Common myeloid progenitor, CD34-positive (primary cell): ENCODE measurements at regions of chr9 and their contacts with region 1.

Region 1: DNA sequence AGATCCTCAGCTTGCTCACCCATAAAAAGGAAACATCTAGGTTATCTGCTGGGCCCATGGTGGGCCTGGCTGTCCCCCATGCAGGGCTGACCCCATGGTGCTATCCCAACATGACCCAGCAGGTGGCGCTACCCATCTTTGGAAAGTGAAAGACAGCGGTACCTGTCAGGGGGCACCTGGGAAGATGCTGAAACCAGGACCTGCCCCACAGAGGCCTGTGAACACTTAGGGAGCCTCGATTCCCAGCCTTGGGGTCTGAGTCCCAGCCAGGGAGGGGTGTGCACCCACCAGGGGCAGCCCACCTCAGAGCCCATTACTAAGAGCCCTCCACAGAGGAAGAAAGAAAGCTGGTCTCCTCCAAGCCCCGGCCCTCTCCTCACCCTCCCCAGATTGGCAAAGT is 46.6 kb upstream of the IPPK start:
- DNase-seq: peak; percentile 55 to 76 (median 69)
- H3K4me3 ChIP-seq: no peak overlapping the region
- H3K27ac ChIP-seq: no peak overlapping the region
- H3K4me1 ChIP-seq: peaks cover 11 to 22% (median 17%) of the 10 kb centered on the region in 4 experiments
- H3K27me3 ChIP-seq: no peaks in the 10 kb centered on the region

Region 2: GRCh38 chr9:92728831-92729734 is 12.5 kb after region 1 on chr9:
- CTCF ChIA-PET with region 1: interaction called, 136 read pairs
- POLR2A ChIA-PET with region 1: interaction called, 3 read pairs
- DNase-seq: peak in 2 of 3 donors; percentile 45 to 50
- H3K4me3 ChIP-seq: no peak overlapping the region
- H3K27ac ChIP-seq: no peak overlapping the region
- H3K4me1 ChIP-seq: peaks cover 0 to 15% (median 5%) of the 10 kb centered on the region in 4 experiments
- H3K27me3 ChIP-seq: no peaks in the 10 kb centered on the region

Region 3: GRCh38 chr9:92740446-92740961 is 23.9 kb after region 1 on chr9:
- CTCF ChIA-PET with region 1: interaction called, 136 read pairs
- POLR2A ChIA-PET with region 1: no interaction called
- DNase-seq: peak; percentile 34 to 77 (median 68)
- H3K4me3 ChIP-seq: peak overlapping the region in 6 of 7 experiments; percentile 7 to 63 (median 43)
- H3K27ac ChIP-seq: peak overlapping the region; percentile 62 to 81
- H3K4me1 ChIP-seq: peaks cover 7 to 62% (median 51%) of the 10 kb centered on the region in 4 experiments
- H3K27me3 ChIP-seq: no peaks in the 10 kb centered on the region

Region 4: GRCh38 chr9:92760070-92760469 is 43.5 kb after region 1 on chr9:
- CTCF ChIA-PET with region 1: interaction called, 12 read pairs
- POLR2A ChIA-PET with region 1: interaction called, 4 read pairs
- DNase-seq: no peak
- H3K4me3 ChIP-seq: no peak overlapping the region
- H3K27ac ChIP-seq: peak overlapping the region; percentile 10 to 56
- H3K4me1 ChIP-seq: peaks cover 14 to 52% (median 48%) of the 10 kb centered on the region in 4 experiments
- H3K27me3 ChIP-seq: no peaks in the 10 kb centered on the region

Region 5: GRCh38 chr9:92770360-92770995 is 53.9 kb after region 1 on chr9:
- CTCF ChIA-PET with region 1: interaction called, 21 read pairs
- POLR2A ChIA-PET with region 1: no interaction called
- DNase-seq: peak; percentile 71 to 94 (median 88)
- H3K4me3 ChIP-seq: peak overlapping the region in 1 of 7 experiments; percentile 1
- H3K27ac ChIP-seq: peak overlapping the region; percentile 35 to 78
- H3K4me1 ChIP-seq: peaks cover 6 to 31% (median 25%) of the 10 kb centered on the region in 4 experiments
- H3K27me3 ChIP-seq: no peaks in the 10 kb centered on the region

Region 6: DNA sequence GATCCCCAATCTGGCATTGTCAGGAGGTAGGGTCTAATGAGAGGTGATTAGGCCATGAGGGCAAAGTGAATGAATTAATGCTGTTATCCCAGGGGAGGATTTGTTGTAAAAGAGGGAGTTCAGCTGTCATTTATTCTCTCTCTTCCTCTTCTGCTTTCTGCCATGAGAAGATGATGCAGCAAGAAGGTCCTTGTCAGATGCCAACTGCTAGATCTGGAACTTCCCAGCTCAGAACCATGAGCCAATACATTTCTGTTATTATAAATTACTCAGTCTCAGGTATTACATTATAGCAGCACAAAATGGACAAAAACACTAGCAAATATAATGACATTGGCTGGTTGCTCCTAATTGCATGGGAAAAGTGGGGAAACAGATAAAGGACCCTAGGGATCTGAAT is 63.6 kb after region 1 on chr9:
- CTCF ChIA-PET with region 1: interaction called, 217 read pairs
- POLR2A ChIA-PET with region 1: no interaction called
- DNase-seq: peak in 2 of 3 donors; percentile 31 to 32
- H3K4me3 ChIP-seq: no peak overlapping the region
- H3K27ac ChIP-seq: no peak overlapping the region
- H3K4me1 ChIP-seq: peaks cover 0 to 6% (median 4%) of the 10 kb centered on the region in 4 experiments
- H3K27me3 ChIP-seq: no peaks in the 10 kb centered on the region

Region 7: DNA sequence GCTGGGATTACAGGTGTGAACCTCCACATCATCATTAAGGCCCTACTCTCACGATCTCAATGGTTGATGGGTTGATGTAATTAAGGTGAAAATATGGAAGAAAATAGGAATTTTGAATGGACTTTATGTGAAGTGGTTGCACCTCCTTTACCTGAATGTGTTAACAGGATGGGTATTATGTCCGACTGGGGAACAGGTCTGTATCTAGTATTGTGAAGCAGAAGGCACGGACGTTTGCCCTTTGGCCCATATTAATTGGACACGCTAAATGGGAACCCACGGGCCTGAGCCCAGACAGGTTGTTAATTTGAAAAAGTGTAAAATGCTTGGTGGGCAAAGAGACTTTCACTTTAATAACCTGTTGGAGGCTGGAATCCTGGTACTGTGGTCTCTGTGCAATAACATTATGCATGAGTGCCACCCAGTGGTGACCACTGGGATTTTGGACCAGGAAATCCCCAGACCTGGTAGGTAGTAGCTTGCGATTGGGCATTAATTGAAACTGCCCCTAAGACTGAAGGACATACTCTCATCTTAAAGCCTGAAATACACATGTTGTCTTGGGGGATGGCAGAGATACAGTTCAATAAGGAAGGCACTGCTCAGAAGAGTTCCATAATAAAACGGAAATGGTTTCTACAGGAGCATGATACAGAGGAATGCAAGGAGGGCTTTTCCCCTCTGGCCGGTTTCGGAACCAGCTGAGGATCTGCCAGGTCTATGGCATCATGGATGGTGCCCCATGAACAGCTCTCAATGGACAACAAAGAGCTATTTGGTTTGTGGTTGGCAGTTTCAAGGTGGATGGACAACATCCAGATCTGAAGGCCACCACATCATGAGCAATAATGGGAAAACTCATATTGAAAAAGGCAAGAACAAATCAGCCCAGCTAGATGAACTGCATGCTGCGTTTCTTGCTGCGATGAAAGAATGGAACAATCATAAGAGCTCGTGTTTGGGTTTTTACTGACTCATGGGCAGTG is 74.3 kb after region 1 on chr9:
- CTCF ChIA-PET with region 1: interaction called, 217 read pairs
- POLR2A ChIA-PET with region 1: no interaction called
- DNase-seq: peak; percentile 82 to 93 (median 88)
- H3K4me3 ChIP-seq: peak overlapping the region in 1 of 7 experiments; percentile 45
- H3K27ac ChIP-seq: no peak overlapping the region
- H3K4me1 ChIP-seq: peaks cover 0 to 8% (median 3%) of the 10 kb centered on the region in 4 experiments
- H3K27me3 ChIP-seq: no peaks in the 10 kb centered on the region